ENCODE measurements at regions of chr16 and their contacts with region 1.

Region 1: GRCh38 chr16:24070851-24071250 is 185.3 kb upstream of the CACNG3 start:
- DNase-seq: peak; percentile 74
- ATAC-seq: peak; percentile 67
- H3K4me3 ChIP-seq: no peak overlapping the region
- H3K4me3 Mint-ChIP-seq: peak overlapping the region; percentile 58
- H3K27ac ChIP-seq: peak overlapping the region; percentile 59 to 89
- H3K27ac Mint-ChIP-seq: peak overlapping the region; percentile 94
- H3K4me1 ChIP-seq: peaks cover 49 to 56% of the 10 kb centered on the region in 2 donors
- H3K4me1 Mint-ChIP-seq: peaks cover 51% of the 10 kb centered on the region
- H3K27me3 ChIP-seq: no peaks in the 10 kb centered on the region
- H3K27me3 Mint-ChIP-seq: no peaks in the 10 kb centered on the region
- CTCF ChIP-seq: peak; percentile 75

Region 2: DNA sequence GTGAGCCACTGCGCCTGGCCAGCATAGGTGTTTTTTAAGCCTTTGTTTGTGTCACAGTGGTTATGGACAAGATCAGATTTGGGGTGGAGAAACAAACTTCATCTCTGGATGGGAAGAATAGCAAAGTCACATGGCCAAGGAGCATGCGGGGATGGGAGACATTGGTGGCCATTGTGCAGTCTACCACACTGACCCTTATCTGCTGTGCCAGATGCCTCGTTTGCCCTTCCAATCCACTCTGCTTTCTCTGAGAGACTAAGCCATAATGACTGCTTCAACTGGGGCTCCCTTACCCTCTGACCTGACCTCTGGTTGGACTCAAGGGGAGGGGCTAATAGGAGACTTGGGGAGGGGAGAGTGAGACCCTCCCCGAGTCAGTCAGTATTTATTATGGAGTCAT is 68.2 kb before region 1 on chr16:
- CTCF ChIA-PET with region 1: no interaction called
- POLR2A ChIA-PET with region 1: no interaction called
- intact Hi-C with region 1: no loop called
- DNase-seq: no peak
- ATAC-seq: no peak
- H3K4me3 ChIP-seq: no peak overlapping the region
- H3K4me3 Mint-ChIP-seq: no peak overlapping the region
- H3K27ac ChIP-seq: peak overlapping the region in 1 of 2 donors; percentile 80
- H3K27ac Mint-ChIP-seq: peak overlapping the region; percentile 77
- H3K4me1 ChIP-seq: peaks cover 49 to 50% of the 10 kb centered on the region in 2 donors
- H3K4me1 Mint-ChIP-seq: peaks cover 80% of the 10 kb centered on the region
- H3K27me3 ChIP-seq: no peaks in the 10 kb centered on the region
- H3K27me3 Mint-ChIP-seq: no peaks in the 10 kb centered on the region
- CTCF ChIP-seq: no peak

Region 3: GRCh38 chr16:24054741-24055491 is 15.9 kb before region 1 on chr16:
- CTCF ChIA-PET with region 1: interaction called, 16 read pairs
- POLR2A ChIA-PET with region 1: no interaction called
- intact Hi-C with region 1: no loop called
- DNase-seq: no peak
- ATAC-seq: no peak
- H3K4me3 ChIP-seq: no peak overlapping the region
- H3K4me3 Mint-ChIP-seq: no peak overlapping the region
- H3K27ac ChIP-seq: no peak overlapping the region
- H3K27ac Mint-ChIP-seq: peak overlapping the region; percentile 66
- H3K4me1 ChIP-seq: no peaks in the 10 kb centered on the region
- H3K4me1 Mint-ChIP-seq: peaks cover 31% of the 10 kb centered on the region
- H3K27me3 ChIP-seq: no peaks in the 10 kb centered on the region
- H3K27me3 Mint-ChIP-seq: no peaks in the 10 kb centered on the region
- CTCF ChIP-seq: no peak

Region 4: GRCh38 chr16:24102209-24102660 is 31.4 kb after region 1 on chr16:
- CTCF ChIA-PET with region 1: interaction called, 18 read pairs
- POLR2A ChIA-PET with region 1: no interaction called
- intact Hi-C with region 1: no loop called
- DNase-seq: no peak
- ATAC-seq: no peak
- H3K4me3 ChIP-seq: no peak overlapping the region
- H3K4me3 Mint-ChIP-seq: no peak overlapping the region
- H3K27ac ChIP-seq: no peak overlapping the region
- H3K27ac Mint-ChIP-seq: peak overlapping the region; percentile 22
- H3K4me1 ChIP-seq: no peaks in the 10 kb centered on the region
- H3K4me1 Mint-ChIP-seq: no peaks in the 10 kb centered on the region
- H3K27me3 ChIP-seq: no peaks in the 10 kb centered on the region
- H3K27me3 Mint-ChIP-seq: no peaks in the 10 kb centered on the region
- CTCF ChIP-seq: no peak

Region 5: DNA sequence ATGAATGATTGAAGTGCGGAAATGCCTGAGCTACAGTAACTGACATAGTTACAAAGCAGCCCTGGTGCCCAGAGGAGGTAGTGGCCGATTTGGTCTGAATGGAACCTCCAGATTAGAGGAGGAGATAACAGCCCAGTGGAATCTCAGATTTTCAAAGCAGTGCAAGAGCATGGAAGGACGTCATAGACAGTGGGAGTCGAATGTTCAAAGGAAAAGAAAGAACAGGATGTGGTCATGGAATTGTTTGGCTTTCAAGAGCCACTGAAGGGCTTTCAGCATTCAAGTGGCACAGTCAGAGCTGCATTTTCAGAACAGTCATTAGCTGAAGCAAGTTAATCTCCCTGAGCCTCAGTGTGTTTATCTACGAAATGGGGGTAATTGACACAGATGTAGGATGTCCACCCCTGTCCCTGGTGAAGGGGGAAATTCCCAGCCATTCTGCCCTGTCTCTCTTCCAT is 80.7 kb after region 1 on chr16:
- CTCF ChIA-PET with region 1: interaction called, 11 read pairs
- POLR2A ChIA-PET with region 1: no interaction called
- intact Hi-C with region 1: no loop called
- DNase-seq: no peak
- ATAC-seq: no peak
- H3K4me3 ChIP-seq: no peak overlapping the region
- H3K4me3 Mint-ChIP-seq: no peak overlapping the region
- H3K27ac ChIP-seq: peak overlapping the region in 1 of 2 donors; percentile 5
- H3K27ac Mint-ChIP-seq: peak overlapping the region; percentile 28
- H3K4me1 ChIP-seq: peaks cover 0 to 8% of the 10 kb centered on the region in 2 donors
- H3K4me1 Mint-ChIP-seq: peaks cover 21% of the 10 kb centered on the region
- H3K27me3 ChIP-seq: no peaks in the 10 kb centered on the region
- H3K27me3 Mint-ChIP-seq: no peaks in the 10 kb centered on the region
- CTCF ChIP-seq: no peak

Region 6: DNA sequence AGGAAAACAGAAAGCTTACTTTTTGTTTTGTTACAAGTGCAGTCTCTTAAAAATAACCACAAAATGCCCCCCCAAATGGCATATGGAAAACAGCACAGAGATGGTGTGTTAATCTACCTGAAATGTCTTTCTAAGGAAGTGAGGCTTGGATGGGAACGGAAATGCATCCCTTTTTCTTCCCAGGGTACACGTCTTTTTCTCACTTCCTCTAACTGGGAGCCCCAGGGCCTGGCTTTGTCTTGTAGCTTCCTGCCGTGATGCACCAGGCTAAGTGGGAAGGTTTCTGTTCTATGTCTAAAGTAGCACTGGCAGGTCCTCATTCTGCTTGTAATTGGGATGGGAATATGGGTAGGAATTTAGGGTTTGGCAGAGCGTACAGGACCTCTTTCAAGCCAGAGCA is 132.8 kb after region 1 on chr16:
- CTCF ChIA-PET with region 1: interaction called, 10 read pairs
- POLR2A ChIA-PET with region 1: no interaction called
- intact Hi-C with region 1: no loop called
- DNase-seq: no peak
- ATAC-seq: no peak
- H3K4me3 ChIP-seq: no peak overlapping the region
- H3K4me3 Mint-ChIP-seq: no peak overlapping the region
- H3K27ac ChIP-seq: peak overlapping the region in 1 of 2 donors; percentile 21
- H3K27ac Mint-ChIP-seq: peak overlapping the region; percentile 73
- H3K4me1 ChIP-seq: peaks cover 0 to 14% of the 10 kb centered on the region in 2 donors
- H3K4me1 Mint-ChIP-seq: peaks cover 17% of the 10 kb centered on the region
- H3K27me3 ChIP-seq: no peaks in the 10 kb centered on the region
- H3K27me3 Mint-ChIP-seq: no peaks in the 10 kb centered on the region
- CTCF ChIP-seq: no peak

Region 7: DNA sequence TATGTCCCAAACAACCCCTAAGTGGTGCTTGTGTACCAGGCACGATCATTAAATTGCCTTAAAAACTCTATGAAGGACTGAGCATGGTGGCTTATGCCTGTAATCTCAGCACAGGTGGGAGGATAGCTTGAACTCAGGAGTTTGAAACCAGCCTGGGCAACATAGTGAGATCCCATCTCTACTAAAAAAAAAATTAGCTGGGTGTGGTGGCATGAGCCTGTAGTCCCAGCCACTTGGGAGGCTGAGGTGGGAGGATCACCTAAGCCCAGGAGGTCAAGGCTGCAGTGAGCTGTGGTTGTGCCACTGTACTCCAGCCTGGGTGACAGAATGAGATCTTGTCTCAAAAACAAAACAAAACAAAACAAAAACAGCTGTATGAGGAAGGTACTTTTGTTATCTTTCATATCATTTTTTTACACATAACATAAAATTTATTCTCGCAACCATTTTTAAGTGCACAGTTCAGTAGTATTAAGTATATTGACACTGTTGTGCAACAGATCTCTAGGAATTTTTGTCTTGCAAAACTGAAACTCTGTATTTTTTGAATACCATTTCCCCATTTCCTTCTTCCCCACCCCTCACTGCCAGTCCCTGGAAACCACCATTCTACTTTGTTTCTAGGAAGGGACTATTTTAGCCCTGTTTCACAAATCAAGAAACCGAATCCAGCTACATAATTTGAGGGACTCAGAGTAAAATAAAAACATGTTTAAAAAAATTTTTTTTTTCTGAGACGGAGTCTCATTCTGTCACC is 454.2 kb after region 1 on chr16:
- CTCF ChIA-PET with region 1: no interaction called
- POLR2A ChIA-PET with region 1: no interaction called
- intact Hi-C with region 1: no loop called
- DNase-seq: no peak
- ATAC-seq: no peak
- H3K4me3 ChIP-seq: no peak overlapping the region
- H3K4me3 Mint-ChIP-seq: no peak overlapping the region
- H3K27ac ChIP-seq: no peak overlapping the region
- H3K27ac Mint-ChIP-seq: no peak overlapping the region
- H3K4me1 ChIP-seq: no peaks in the 10 kb centered on the region
- H3K4me1 Mint-ChIP-seq: no peaks in the 10 kb centered on the region
- H3K27me3 ChIP-seq: peaks cover 0 to 6% (median 2%) of the 10 kb centered on the region in 4 experiments
- H3K27me3 Mint-ChIP-seq: peaks cover 4% of the 10 kb centered on the region
- CTCF ChIP-seq: no peak

Measured in B cell (primary cell).